ENCODE measurements at regions of chr11 and their contacts with region 1.

Region 1: GRCh38 chr11:96012086-96012824 is 88.3 kb upstream of the MTMR2 start:
- DNase-seq: peak; percentile 64 to 89 (median 75)
- H3K4me3 ChIP-seq: no peak overlapping the region
- H3K4me3 Mint-ChIP-seq: peak overlapping the region in 7 of 8 donors; percentile 22 to 83 (median 63)
- H3K27ac ChIP-seq: peak overlapping the region; percentile 44
- H3K27ac Mint-ChIP-seq: peak overlapping the region; percentile 64 to 97 (median 93)
- H3K4me1 ChIP-seq: peaks cover 59% of the 10 kb centered on the region
- H3K4me1 Mint-ChIP-seq: peaks cover 9 to 64% (median 52%) of the 10 kb centered on the region in 4 donors
- H3K27me3 ChIP-seq: no peaks in the 10 kb centered on the region
- H3K27me3 Mint-ChIP-seq: no peaks in the 10 kb centered on the region

Region 2: DNA sequence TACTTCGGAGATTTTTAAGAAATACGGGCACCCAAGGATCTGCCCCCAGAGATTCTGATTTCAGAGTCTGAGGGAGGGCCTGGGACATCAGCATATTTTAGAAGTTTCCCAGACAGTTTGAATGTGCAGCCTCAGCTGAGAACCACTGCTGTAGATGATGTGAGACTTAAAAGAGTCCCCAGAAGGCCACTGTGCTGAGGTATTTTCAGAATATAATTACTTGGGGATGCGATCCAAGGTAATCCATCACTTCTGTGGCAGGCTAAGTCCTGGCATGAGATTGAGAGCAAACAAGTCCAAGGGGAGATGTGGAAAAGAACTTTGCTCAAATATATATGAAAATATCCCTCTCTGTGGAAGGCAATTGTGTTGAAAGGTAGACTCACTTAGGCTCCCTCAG is 1292.4 kb before region 1 on chr11:
- CTCF ChIA-PET with region 1: no interaction called
- POLR2A ChIA-PET with region 1: no interaction called
- intact Hi-C with region 1: no loop called
- DNase-seq: no peak
- H3K4me3 ChIP-seq: no peak overlapping the region
- H3K4me3 Mint-ChIP-seq: no peak overlapping the region
- H3K27ac ChIP-seq: no peak overlapping the region
- H3K27ac Mint-ChIP-seq: no peak overlapping the region
- H3K4me1 ChIP-seq: no peaks in the 10 kb centered on the region
- H3K4me1 Mint-ChIP-seq: no peaks in the 10 kb centered on the region
- H3K27me3 ChIP-seq: no peaks in the 10 kb centered on the region
- H3K27me3 Mint-ChIP-seq: peaks cover 18 to 21% of the 10 kb centered on the region in 2 donors

Region 3: DNA sequence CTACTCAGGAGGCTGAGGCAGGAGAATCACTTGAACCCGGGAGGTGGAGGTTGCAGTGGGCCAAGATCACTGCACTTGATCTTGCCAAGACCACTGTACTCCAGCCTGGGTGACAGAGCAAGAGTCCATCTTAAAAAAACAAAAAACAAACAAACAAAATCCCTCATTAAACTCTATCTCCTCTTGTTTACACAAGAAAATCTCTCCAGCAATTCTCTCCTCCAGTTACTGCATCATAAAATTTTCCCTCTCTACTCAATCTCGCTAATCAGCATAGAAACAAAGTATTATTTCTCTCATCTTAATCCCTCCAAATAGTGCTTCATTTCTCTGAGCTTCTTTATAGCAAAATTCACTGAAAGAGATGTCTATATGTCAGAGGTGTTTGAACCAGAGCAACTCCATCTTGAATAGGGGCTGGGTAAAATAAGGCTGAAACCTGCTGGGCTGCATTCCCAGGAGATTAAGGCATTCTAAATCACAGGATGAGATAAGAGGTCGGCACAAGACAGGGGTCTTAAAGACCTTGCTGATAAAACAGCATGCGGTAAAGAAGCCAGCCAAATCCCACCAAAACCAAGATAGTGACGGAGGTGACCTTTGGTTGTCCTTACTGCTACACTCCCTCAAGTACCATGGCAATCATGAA is 108.1 kb before region 1 on chr11:
- CTCF ChIA-PET with region 1: no interaction called
- POLR2A ChIA-PET with region 1: no interaction called
- intact Hi-C with region 1: no loop called
- DNase-seq: no peak
- H3K4me3 ChIP-seq: no peak overlapping the region
- H3K4me3 Mint-ChIP-seq: no peak overlapping the region
- H3K27ac ChIP-seq: no peak overlapping the region
- H3K27ac Mint-ChIP-seq: no peak overlapping the region
- H3K4me1 ChIP-seq: no peaks in the 10 kb centered on the region
- H3K4me1 Mint-ChIP-seq: peaks cover 0 to 17% (median 5%) of the 10 kb centered on the region in 4 donors
- H3K27me3 ChIP-seq: no peaks in the 10 kb centered on the region
- H3K27me3 Mint-ChIP-seq: no peaks in the 10 kb centered on the region

Region 4: DNA sequence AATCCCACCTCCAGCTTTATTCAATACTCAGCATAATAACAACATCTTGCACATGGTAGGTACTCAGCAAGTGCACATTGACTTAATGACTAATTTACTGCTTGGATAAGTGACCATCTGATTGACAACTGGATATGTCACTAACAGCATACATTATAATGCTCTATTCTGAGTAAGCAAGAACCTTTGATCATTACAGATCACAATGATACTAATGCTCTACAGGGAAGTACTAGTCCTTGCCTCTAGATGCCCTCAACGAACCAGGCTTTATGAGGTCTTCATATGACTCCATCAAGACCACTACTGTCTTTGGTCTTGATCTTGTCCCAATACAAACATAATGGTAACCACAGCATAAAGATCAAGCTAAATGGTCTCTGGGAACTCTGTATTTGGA is 79.2 kb after region 1 on chr11:
- CTCF ChIA-PET with region 1: interaction called, 3 read pairs
- POLR2A ChIA-PET with region 1: interaction called, 3 read pairs
- intact Hi-C with region 1: loop called (anchors 2 kb)
- DNase-seq: peak; percentile 34 to 54 (median 43)
- H3K4me3 ChIP-seq: no peak overlapping the region
- H3K4me3 Mint-ChIP-seq: peak overlapping the region in 4 of 8 donors; percentile 24 to 75 (median 32)
- H3K27ac ChIP-seq: no peak overlapping the region
- H3K27ac Mint-ChIP-seq: peak overlapping the region in 3 of 7 donors; percentile 23 to 43 (median 40)
- H3K4me1 ChIP-seq: peaks cover 32% of the 10 kb centered on the region
- H3K4me1 Mint-ChIP-seq: peaks cover 32 to 79% (median 61%) of the 10 kb centered on the region in 4 donors
- H3K27me3 ChIP-seq: no peaks in the 10 kb centered on the region
- H3K27me3 Mint-ChIP-seq: no peaks in the 10 kb centered on the region

Region 5: DNA sequence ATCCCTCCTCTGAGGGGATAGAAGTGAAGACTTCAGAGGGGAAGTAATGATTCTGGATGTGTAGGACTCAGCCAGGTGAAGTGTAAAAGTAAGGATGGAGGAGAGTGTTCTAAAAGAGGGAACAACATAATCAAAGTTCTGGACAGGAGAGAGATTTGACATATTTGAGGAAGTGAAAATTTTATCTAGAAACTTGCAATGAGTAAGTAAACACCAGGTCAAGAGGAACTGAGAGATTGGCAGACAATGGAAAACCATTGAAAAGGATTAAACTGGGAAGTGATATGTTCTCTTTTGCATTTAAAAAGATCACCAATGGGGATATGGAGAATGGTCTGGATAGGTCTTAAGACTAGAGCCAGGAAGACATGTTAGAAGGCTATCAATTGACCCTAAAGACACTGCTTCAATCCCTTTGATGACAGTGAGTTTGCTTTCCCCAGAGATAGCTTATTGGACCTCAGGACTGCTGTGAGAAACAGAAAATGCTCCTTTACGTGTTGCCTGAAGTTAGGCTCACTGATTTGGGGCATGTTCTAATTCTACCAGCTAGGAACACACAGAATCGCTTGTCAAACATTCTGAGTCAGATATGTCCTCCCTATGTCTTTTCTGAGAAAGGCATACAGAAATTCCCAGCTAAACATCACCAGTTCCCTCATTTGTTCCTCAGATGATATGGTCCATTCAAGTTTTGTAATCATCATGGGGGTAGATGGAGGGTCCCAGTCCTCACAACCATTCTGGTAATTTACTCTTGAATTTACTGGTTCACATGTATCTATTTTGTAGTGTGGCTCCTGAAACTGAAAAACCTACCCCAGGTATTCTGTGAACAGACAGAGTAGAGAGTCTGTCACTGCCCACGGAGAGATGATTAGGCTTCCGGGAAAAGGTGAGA is 185.8 kb after region 1 on chr11:
- CTCF ChIA-PET with region 1: no interaction called
- POLR2A ChIA-PET with region 1: interaction called, 3 read pairs
- intact Hi-C with region 1: loop called (anchors 5 kb)
- DNase-seq: no peak
- H3K4me3 ChIP-seq: no peak overlapping the region
- H3K4me3 Mint-ChIP-seq: peak overlapping the region in 7 of 8 donors; percentile 2 to 72 (median 46)
- H3K27ac ChIP-seq: no peak overlapping the region
- H3K27ac Mint-ChIP-seq: peak overlapping the region; percentile 61 to 93 (median 84)
- H3K4me1 ChIP-seq: peaks cover 71% of the 10 kb centered on the region
- H3K4me1 Mint-ChIP-seq: peaks cover 62 to 88% (median 74%) of the 10 kb centered on the region in 4 donors
- H3K27me3 ChIP-seq: no peaks in the 10 kb centered on the region
- H3K27me3 Mint-ChIP-seq: no peaks in the 10 kb centered on the region

Measured in CD4-positive, alpha-beta memory T cell (primary cell).